AG04450 (cell line): ENCODE measurements at regions of chr9 and their contacts with region 1.

Region 1: DNA sequence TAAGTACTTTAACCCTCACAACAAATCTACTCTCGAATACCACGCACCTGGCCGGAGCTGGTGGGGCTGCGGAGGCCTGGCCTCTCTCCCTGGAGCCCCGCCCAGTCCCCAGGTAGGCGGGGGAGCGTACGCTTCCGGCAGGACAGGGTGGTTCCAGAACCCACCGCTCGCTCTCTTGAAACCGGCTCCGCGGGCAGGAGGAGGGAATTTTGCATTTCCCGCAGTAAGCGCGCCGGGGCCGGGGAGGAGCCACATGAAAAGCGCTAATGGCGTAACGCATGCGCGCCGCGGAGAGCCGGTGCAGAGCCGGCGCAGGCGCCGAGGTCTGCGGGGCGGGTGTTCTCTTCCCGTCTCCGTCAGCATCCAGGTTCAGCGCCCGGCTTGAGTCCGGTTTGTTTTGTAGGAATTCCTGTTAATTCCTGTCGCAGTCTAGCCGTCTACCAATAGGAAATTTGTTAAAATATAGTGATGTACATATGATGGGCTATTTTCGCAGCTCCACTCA is 20.8 kb downstream of the CAVIN4 start:
- DNase-seq: no peak
- H3K4me3 ChIP-seq: peak overlapping the region; percentile 63
- H3K27ac ChIP-seq: no peak overlapping the region
- H3K27me3 ChIP-seq: peaks cover 5% of the 10 kb centered on the region
- CTCF ChIP-seq: no peak

Region 2: DNA sequence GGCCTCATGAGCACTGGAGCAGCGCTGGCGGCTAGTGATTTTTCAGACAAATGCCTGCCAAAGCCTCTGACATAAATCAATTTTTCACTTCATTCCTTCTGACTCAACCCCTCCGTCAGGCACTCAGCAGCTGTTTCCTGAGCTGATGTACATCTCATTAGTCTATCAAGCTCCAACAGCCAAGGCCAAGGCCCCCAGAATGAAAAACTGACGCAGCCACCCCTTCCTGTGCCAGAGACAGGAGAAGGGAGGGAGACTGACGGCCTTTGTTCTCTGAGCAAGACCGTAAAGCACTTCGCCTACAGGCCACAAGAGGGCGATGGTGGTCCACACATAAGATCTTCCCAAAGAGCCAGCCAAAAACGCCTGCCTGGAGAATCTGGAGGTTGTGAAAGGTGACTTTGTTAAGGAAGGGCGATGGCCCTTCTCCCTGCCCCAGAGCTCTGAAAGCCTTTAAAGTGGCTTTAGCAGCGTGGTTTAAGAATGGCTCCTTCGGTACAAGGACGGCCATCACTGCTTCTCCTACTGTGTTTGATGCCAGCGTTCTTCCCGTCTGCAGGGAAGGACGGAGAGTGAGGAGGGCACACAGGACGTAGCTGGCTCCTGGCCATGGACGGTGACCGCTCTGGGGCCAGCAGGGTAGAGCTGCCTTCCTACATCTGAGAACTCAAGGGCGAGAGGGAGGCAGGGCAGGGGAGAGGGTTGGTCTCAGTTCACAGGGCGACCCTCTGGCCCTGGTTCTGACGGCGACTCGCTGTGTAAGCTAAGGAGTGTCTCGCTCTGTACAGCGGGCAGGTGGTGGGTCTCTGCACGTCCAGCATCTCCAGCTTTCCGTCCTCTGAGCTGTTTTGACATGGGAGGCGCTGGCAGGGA is 1414.0 kb before region 1 on chr9:
- CTCF ChIA-PET with region 1: interaction called, 11 read pairs
- POLR2A ChIA-PET with region 1: no interaction called
- DNase-seq: peak; percentile 81
- H3K4me3 ChIP-seq: peak overlapping the region; percentile 38
- H3K27ac ChIP-seq: no peak overlapping the region
- H3K27me3 ChIP-seq: peaks cover 10% of the 10 kb centered on the region
- CTCF ChIP-seq: peak; percentile 97

Region 3: DNA sequence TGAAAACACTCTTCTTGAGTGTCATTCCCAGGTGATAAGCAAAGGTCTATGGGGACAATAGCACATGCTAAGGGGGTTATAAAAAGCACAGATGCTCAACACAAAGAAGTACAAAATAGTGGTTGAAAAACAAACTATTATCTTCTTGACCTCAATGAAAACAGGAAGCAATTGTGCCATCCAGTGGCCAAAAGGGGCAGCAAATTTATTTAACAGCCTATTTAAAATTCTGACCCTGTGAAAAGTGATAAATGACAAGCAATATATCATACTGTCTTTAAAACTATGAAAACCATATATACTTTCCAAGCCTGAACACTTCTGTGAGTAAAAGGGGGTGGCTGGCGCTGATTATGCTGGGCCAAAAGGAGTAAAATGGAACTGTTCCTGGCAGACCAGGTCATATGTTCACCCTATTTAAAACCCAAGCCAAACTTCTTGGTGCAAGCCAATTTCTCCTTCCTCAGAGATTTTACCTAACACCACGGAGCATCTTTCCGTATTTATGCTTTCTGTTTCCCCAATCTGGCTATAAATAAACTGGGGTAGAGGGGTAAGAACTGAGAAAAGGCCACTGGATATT is 275.6 kb before region 1 on chr9:
- CTCF ChIA-PET with region 1: interaction called, 58 read pairs
- POLR2A ChIA-PET with region 1: no interaction called
- DNase-seq: no peak
- H3K4me3 ChIP-seq: no peak overlapping the region
- H3K27ac ChIP-seq: no peak overlapping the region
- H3K27me3 ChIP-seq: no peaks in the 10 kb centered on the region
- CTCF ChIP-seq: peak; percentile 72

Region 4: DNA sequence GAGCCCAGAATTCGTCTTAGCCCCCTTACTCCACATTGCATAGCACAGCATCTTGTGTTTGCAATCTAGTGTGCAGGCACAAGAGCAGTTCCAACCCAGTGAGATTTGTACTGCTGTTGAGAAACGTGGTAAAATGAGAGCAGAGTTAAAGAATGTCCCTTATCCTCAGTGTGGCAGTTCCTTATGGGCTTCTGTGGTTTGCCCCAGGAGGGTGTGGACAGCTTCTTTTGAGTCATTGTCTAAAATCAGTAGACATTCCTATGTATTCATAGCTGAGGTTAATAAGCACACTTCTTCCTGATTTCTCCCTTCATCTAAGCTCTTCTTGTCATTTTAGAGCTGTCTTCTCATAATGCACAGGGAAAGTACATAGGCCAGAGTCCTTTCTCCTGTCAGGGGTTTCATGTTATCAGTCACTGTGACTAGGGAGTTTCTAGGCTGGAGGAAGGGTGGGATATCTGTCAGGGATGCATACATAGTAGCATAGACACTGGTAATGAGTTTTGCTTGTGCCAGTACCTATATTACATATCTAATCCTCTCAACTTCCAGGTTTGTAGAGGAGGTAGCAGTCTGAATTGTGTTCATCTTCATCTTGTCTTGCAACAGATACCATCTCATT is 22.8 kb before region 1 on chr9:
- CTCF ChIA-PET with region 1: interaction called, 22 read pairs
- POLR2A ChIA-PET with region 1: interaction called, 3 read pairs
- DNase-seq: no peak
- H3K4me3 ChIP-seq: no peak overlapping the region
- H3K27ac ChIP-seq: no peak overlapping the region
- H3K27me3 ChIP-seq: no peaks in the 10 kb centered on the region
- CTCF ChIP-seq: no peak

Region 5: DNA sequence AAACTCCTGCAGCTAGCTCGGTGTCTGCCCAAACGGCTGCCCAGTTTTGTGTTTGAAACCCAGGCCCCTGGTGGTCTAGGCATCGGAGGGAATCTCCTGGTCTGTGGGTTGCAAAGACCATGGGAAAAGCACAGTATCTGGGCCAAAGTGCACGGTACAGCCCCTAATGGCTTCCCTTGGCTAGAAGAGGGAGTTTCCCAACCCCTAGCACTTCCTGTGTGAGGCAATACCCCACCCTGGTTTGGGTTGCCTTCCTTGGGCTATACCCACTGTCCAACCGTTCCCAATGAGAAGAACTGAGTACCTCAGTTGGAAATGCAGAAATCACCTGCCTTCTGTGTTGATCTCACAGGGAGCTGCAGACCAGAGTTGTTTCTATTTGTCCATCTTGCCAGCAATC is 21.0 kb after region 1 on chr9:
- CTCF ChIA-PET with region 1: interaction called, 22 read pairs
- POLR2A ChIA-PET with region 1: no interaction called
- DNase-seq: no peak
- H3K4me3 ChIP-seq: no peak overlapping the region
- H3K27ac ChIP-seq: no peak overlapping the region
- H3K27me3 ChIP-seq: no peaks in the 10 kb centered on the region
- CTCF ChIP-seq: no peak

Region 6: DNA sequence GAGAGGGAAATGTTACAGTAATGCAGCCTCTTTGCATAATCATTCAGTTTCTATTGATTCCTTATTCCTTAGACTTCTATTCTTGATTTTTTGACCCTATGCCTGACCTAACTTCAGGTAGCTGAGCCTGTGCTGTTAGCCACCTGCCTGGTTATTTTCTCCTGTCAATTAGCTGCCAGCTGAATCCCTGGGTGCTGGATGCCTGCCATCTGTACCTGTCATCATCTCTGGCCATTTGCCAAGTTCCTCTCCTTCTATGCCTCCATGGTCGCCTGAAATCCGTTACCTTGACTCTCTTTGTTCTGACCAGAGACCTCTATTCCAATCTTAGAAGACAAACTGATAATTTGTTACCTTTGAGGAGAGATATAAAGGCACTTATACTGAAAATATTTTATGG is 157.5 kb after region 1 on chr9:
- CTCF ChIA-PET with region 1: no interaction called
- POLR2A ChIA-PET with region 1: no interaction called
- DNase-seq: no peak
- H3K4me3 ChIP-seq: no peak overlapping the region
- H3K27ac ChIP-seq: no peak overlapping the region
- H3K27me3 ChIP-seq: no peaks in the 10 kb centered on the region
- CTCF ChIP-seq: no peak

Region 7: DNA sequence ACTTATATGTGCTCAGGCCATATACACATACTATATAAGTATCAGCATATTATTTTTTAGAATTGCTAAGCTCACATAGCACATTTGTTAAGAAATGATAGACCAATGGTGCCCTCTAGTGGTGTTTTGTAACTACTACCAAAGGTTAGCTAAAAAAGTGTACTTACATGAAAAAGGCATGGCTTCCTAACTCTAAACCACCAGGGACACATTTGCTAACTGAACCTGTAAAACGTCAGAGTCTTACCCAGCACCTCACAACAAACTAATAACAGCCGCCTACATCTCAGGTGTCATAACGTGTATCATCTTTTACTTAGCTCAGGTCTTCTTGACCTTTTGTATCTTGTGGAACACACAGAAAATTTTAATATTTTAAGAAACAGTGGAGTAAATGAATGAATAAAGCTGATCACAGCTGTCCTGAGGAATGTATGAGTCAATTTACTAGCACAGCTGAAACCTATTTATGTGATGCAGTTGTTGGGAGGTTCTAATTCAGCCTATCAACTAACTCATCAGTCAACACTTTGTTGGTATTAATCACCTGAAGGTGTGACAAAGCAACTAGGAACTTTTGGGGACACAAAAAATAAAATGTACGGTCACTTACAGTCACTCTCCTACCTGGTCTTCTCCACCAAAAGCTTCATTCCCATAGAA is 713.2 kb after region 1 on chr9:
- CTCF ChIA-PET with region 1: interaction called, 277 read pairs
- POLR2A ChIA-PET with region 1: no interaction called
- DNase-seq: peak; percentile 61
- H3K4me3 ChIP-seq: no peak overlapping the region
- H3K27ac ChIP-seq: no peak overlapping the region
- H3K27me3 ChIP-seq: no peaks in the 10 kb centered on the region
- CTCF ChIP-seq: peak; percentile 74